ENCODE measurements at regions of chrX and their contacts with region 1.

Region 1: GRCh38 chrX:76427560-76428242 is at the start of gene MAGEE1:
- DNase-seq: peak; percentile 70
- ATAC-seq: peak; percentile 83
- H3K4me3 Mint-ChIP-seq: peak within 1 kb of the TSS; percentile 91
- H3K27ac Mint-ChIP-seq: peak within 1 kb of the TSS; percentile 76
- H3K4me1 Mint-ChIP-seq: peaks cover 11% of the 10 kb centered on the region
- H3K27me3 Mint-ChIP-seq: no peaks in the 10 kb centered on the region
- CTCF ChIP-seq: no peak
- total RNA-seq, gene MAGEE1: 3.1 and 3.3 TPM in 2 replicates

Region 2: DNA sequence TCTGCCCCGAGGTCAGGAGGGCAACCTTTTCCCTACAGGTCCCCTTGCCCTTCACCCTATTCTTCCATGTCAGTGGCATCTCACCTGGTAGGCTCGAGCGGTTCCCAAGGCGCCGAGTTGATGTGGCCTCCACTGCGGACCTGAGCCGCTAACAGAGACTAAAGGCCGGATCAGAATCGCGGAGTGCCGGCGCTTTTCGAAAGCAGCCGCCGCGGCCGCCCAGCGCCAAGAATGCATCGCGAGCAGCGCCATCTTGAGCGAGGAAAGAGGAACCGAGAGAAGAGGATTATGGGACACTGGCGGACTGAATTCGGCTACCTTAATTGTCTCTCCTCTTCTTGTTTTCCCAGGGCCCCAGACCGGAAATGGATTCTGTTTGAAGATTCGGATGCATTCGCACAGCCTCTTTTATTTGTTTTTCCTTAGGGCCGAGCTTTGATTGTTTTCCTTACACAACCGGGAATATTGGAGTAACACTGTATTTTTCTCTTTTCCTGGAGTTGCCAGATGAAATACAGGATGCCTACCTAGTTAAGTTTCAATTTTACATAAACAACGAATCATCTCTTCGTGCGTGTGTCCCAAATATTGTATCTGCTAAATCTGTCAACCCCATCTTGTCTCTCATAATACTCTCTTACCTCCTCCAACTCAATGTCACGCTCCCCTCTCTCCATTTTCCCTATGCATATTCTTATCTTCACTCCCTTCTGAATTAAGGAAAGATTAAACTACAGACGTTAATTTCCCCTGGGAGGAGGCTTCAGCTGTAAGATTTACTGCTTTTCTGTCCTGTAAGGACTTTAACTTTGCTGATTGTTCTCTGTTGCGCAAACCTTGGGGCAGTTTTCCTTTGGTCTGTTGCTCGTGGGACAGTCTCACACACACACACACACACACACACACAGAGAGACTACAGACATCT is 1271.4 kb before region 1 on chrX and contains the start of gene ABCB7:
- CTCF ChIA-PET with region 1: no interaction called
- POLR2A ChIA-PET with region 1: no interaction called
- intact Hi-C with region 1: loop called (anchors 5 kb)
- DNase-seq: peak; percentile 41
- ATAC-seq: peak; percentile 91
- H3K4me3 Mint-ChIP-seq: peak within 1 kb of the TSS; percentile 94
- H3K27ac Mint-ChIP-seq: peak within 1 kb of the TSS; percentile 96
- H3K4me1 Mint-ChIP-seq: peaks cover 39% of the 10 kb centered on the region
- H3K27me3 Mint-ChIP-seq: no peaks in the 10 kb centered on the region
- CTCF ChIP-seq: no peak
- total RNA-seq, gene ABCB7: 41.3 and 42.2 TPM in 2 replicates

Region 3: DNA sequence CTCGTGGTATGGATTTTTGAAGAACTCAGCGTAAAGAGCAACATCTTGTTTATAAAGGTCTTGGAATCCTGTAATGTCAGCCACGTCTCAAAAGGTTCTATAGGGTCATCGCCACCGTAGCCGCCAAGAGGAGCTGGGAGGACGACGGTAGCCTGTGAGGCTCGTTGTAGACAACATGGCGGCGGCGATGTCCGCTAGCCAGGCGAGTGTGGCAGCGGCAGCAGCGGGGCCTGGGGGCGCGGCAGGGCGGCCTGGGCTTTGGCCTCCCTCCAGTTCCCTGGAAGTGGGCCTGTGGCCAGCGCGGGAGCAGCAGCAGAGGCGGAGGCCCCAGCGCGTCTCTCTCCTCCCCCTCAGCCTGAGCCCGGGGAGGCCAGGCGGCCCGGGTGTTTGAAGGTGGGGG is 398.3 kb before region 1 on chrX:
- CTCF ChIA-PET with region 1: no interaction called
- POLR2A ChIA-PET with region 1: no interaction called
- intact Hi-C with region 1: no loop called
- DNase-seq: no peak
- ATAC-seq: no peak
- H3K4me3 Mint-ChIP-seq: no peak overlapping the region
- H3K27ac Mint-ChIP-seq: no peak overlapping the region
- H3K4me1 Mint-ChIP-seq: no peaks in the 10 kb centered on the region
- H3K27me3 Mint-ChIP-seq: no peaks in the 10 kb centered on the region
- CTCF ChIP-seq: no peak

Region 4: GRCh38 chrX:76172325-76172893 is 255.3 kb before region 1 on chrX:
- CTCF ChIA-PET with region 1: no interaction called
- POLR2A ChIA-PET with region 1: interaction called, 4 read pairs
- intact Hi-C with region 1: loop called (anchors 5 kb)
- DNase-seq: no peak
- ATAC-seq: peak; percentile 51
- H3K4me3 Mint-ChIP-seq: peak overlapping the region; percentile 97
- H3K27ac Mint-ChIP-seq: peak overlapping the region; percentile 92
- H3K4me1 Mint-ChIP-seq: peaks cover 42% of the 10 kb centered on the region
- H3K27me3 Mint-ChIP-seq: no peaks in the 10 kb centered on the region
- CTCF ChIP-seq: no peak

Region 5: GRCh38 chrX:76398461-76398860 is 29.2 kb before region 1 on chrX:
- CTCF ChIA-PET with region 1: no interaction called
- POLR2A ChIA-PET with region 1: no interaction called
- intact Hi-C with region 1: no loop called
- DNase-seq: no peak
- ATAC-seq: no peak
- H3K4me3 Mint-ChIP-seq: no peak overlapping the region
- H3K27ac Mint-ChIP-seq: no peak overlapping the region
- H3K4me1 Mint-ChIP-seq: no peaks in the 10 kb centered on the region
- H3K27me3 Mint-ChIP-seq: no peaks in the 10 kb centered on the region
- CTCF ChIP-seq: no peak

Region 6: DNA sequence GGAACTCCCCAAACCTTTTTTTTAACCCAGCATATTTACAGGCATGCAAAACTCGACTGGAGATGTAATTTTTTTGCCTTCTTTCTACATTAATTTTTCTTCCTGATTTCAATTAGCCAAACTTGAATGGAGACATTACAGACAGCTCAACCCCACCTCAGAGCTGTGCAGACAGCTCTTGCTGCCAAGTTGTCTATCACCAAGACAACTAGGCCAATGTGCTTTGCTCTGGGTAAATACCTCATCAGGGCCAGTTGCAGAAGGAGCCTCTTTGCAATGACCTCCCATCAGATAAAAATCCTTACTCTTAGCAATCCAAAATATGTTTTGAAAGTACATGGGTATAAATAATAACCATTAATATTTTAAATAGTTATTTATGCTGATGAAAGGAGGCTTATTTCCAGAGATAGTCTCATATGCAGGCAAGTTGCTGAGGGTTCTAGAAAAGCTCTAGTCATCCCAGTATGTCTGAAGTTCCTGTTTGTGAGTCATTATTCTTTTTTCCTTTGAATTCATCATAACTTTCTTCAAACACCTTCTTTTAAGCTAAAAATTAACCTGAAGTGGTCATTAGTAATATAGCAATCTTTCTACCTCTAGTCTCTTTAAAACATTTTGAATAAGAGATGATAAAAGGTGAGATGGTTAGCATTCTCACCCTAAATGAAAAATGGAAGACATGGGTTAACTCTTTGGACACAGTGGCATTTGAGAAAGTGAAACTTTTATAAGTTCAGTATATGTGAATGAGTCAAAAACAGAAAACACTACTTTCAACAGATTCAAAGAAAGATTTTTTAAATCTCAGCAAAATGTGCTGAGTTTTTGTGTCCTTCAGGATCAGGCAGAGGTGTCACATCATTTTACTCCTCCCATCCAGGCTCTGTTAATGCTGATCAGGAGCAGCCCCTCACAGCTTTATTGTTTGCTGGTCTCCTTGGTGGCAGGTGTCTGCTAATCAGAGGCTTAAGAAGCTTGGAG is 544.0 kb after region 1 on chrX:
- CTCF ChIA-PET with region 1: no interaction called
- POLR2A ChIA-PET with region 1: no interaction called
- intact Hi-C with region 1: no loop called
- DNase-seq: no peak
- ATAC-seq: no peak
- H3K4me3 Mint-ChIP-seq: no peak overlapping the region
- H3K27ac Mint-ChIP-seq: no peak overlapping the region
- H3K4me1 Mint-ChIP-seq: no peaks in the 10 kb centered on the region
- H3K27me3 Mint-ChIP-seq: no peaks in the 10 kb centered on the region
- CTCF ChIP-seq: no peak